ENCODE measurements at regions of chr1 and their contacts with region 1.

Region 1: GRCh38 chr1:84944767-84945486 is 51.9 kb upstream of the LPAR3 start:
- DNase-seq: peak; percentile 67 to 90 (median 70)
- ATAC-seq: peak; percentile 96
- H3K4me3 ChIP-seq: no peak overlapping the region
- H3K27ac ChIP-seq: no peak overlapping the region; the same call in 2 of the 3 replicates
- H3K4me1 ChIP-seq: no peaks in the 10 kb centered on the region; a peak in 1 of 5 replicates
- H3K27me3 ChIP-seq: peaks cover 14 to 21% of the 10 kb centered on the region in 2 experiments; a peak in 4 of 5 replicates
- CTCF ChIP-seq: peak; percentile 71 to 88 (median 73)
- EP300 ChIP-seq: no peak
- POLR2A ChIP-seq: no peak
- RAD21 ChIP-seq: peak; percentile 87 to 94

Region 2: DNA sequence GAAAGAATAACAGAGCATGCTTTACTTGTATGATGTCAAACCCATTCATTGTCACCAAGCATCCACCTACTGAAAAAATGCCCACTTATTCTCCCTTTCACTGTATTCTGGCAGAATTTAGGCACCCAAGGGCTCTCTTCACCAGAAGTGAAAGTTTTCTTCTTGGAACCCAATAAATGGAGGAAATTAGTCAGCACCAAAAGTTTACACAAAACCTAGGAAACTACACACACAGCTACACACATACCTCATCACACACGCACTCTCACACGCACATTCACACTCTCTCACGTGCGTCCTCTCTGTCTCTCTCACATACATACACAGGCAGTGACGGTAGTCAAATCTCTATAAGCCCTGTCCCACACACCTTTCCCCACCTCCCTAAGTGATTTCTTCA is 14.4 kb after region 1 on chr1:
- CTCF ChIA-PET with region 1: no interaction called
- POLR2A ChIA-PET with region 1: no interaction called
- in situ Hi-C with region 1: no loop called
- intact Hi-C with region 1: no loop called
- DNase-seq: no peak
- ATAC-seq: no peak
- H3K4me3 ChIP-seq: no peak overlapping the region
- H3K27ac ChIP-seq: no peak overlapping the region
- H3K4me1 ChIP-seq: no peaks in the 10 kb centered on the region
- H3K27me3 ChIP-seq: no peaks in the 10 kb centered on the region; a peak in 1 of 5 replicates
- CTCF ChIP-seq: no peak
- EP300 ChIP-seq: no peak
- POLR2A ChIP-seq: no peak
- RAD21 ChIP-seq: no peak

Region 3: GRCh38 chr1:84996846-84997666 is 52.1 kb after region 1 on chr1 and contains the start of gene MCOLN2:
- CTCF ChIA-PET with region 1: no interaction called
- POLR2A ChIA-PET with region 1: no interaction called
- in situ Hi-C with region 1: no loop called
- intact Hi-C with region 1: loop called (anchors 2 kb)
- DNase-seq: peak; percentile 7 to 61 (median 56)
- ATAC-seq: peak; percentile 96
- H3K4me3 ChIP-seq: peak within 1 kb of the TSS; percentile 18; the same call in 1 of the 2 replicates
- H3K27ac ChIP-seq: no peak within 1 kb of the TSS
- H3K4me1 ChIP-seq: peaks cover 0 to 13% of the 10 kb centered on the region in 2 experiments; a peak in 2 of 5 replicates
- H3K27me3 ChIP-seq: peaks cover 12 to 26% of the 10 kb centered on the region in 2 experiments; a peak in 3 of 5 replicates
- CTCF ChIP-seq: no peak
- EP300 ChIP-seq: no peak
- POLR2A ChIP-seq: no peak
- RAD21 ChIP-seq: no peak
- polyA plus RNA-seq, gene MCOLN2: not detected

Region 4: GRCh38 chr1:85024718-85025117 is 79.8 kb after region 1 on chr1:
- CTCF ChIA-PET with region 1: interaction called, 5 read pairs
- POLR2A ChIA-PET with region 1: no interaction called
- in situ Hi-C with region 1: no loop called
- intact Hi-C with region 1: loop called (anchors 2 kb)
- DNase-seq: no peak
- ATAC-seq: peak; percentile 50; the same call in 1 of the 3 replicates
- H3K4me3 ChIP-seq: no peak overlapping the region
- H3K27ac ChIP-seq: no peak overlapping the region
- H3K4me1 ChIP-seq: no peaks in the 10 kb centered on the region
- H3K27me3 ChIP-seq: peaks cover 2 to 6% of the 10 kb centered on the region in 2 experiments; a peak in 1 of 5 replicates
- CTCF ChIP-seq: no peak
- EP300 ChIP-seq: no peak
- POLR2A ChIP-seq: no peak
- RAD21 ChIP-seq: no peak

Region 5: GRCh38 chr1:85091671-85092280 is 146.8 kb after region 1 on chr1:
- CTCF ChIA-PET with region 1: no interaction called
- POLR2A ChIA-PET with region 1: no interaction called
- in situ Hi-C with region 1: no loop called
- intact Hi-C with region 1: loop called (anchors 5 kb)
- DNase-seq: no peak
- ATAC-seq: peak; percentile 44
- H3K4me3 ChIP-seq: no peak overlapping the region
- H3K27ac ChIP-seq: no peak overlapping the region
- H3K4me1 ChIP-seq: no peaks in the 10 kb centered on the region
- H3K27me3 ChIP-seq: peaks cover 4 to 5% of the 10 kb centered on the region in 2 experiments; a peak in 4 of 5 replicates
- CTCF ChIP-seq: no peak
- EP300 ChIP-seq: no peak
- POLR2A ChIP-seq: no peak
- RAD21 ChIP-seq: no peak

Region 6: GRCh38 chr1:85109475-85109874 is 164.5 kb after region 1 on chr1:
- CTCF ChIA-PET with region 1: no interaction called
- POLR2A ChIA-PET with region 1: no interaction called
- in situ Hi-C with region 1: no loop called
- intact Hi-C with region 1: loop called (anchors 2 kb)
- DNase-seq: peak; percentile 23 to 76 (median 52)
- ATAC-seq: peak; percentile 100
- H3K4me3 ChIP-seq: no peak overlapping the region
- H3K27ac ChIP-seq: no peak overlapping the region
- H3K4me1 ChIP-seq: no peaks in the 10 kb centered on the region
- H3K27me3 ChIP-seq: peaks cover 0 to 6% of the 10 kb centered on the region in 2 experiments; a peak in 1 of 5 replicates
- CTCF ChIP-seq: peak; percentile 83 to 91 (median 90)
- EP300 ChIP-seq: no peak
- POLR2A ChIP-seq: no peak
- RAD21 ChIP-seq: peak; percentile 94 to 96

Region 7: GRCh38 chr1:85259118-85259911 is 314.4 kb after region 1 on chr1 and contains the start of gene C1orf52:
- CTCF ChIA-PET with region 1: interaction called, 30 read pairs
- POLR2A ChIA-PET with region 1: no interaction called
- in situ Hi-C with region 1: loop called (anchors 5 kb)
- intact Hi-C with region 1: loop called (anchors 1 kb)
- DNase-seq: peak; percentile 91 to 96 (median 92)
- ATAC-seq: peak; percentile 97
- H3K4me3 ChIP-seq: peak within 1 kb of the TSS; percentile 93
- H3K27ac ChIP-seq: peak within 1 kb of the TSS; percentile 86
- H3K4me1 ChIP-seq: peaks cover 3 to 10% of the 10 kb centered on the region in 2 experiments; a peak in 4 of 5 replicates
- H3K27me3 ChIP-seq: no peaks in the 10 kb centered on the region
- CTCF ChIP-seq: peak; percentile 88 to 94 (median 94)
- EP300 ChIP-seq: no peak
- POLR2A ChIP-seq: peak; percentile 95
- RAD21 ChIP-seq: peak; percentile 77 to 88
- polyA plus RNA-seq, gene C1orf52: 17.0 to 22.5 TPM

Region 8: DNA sequence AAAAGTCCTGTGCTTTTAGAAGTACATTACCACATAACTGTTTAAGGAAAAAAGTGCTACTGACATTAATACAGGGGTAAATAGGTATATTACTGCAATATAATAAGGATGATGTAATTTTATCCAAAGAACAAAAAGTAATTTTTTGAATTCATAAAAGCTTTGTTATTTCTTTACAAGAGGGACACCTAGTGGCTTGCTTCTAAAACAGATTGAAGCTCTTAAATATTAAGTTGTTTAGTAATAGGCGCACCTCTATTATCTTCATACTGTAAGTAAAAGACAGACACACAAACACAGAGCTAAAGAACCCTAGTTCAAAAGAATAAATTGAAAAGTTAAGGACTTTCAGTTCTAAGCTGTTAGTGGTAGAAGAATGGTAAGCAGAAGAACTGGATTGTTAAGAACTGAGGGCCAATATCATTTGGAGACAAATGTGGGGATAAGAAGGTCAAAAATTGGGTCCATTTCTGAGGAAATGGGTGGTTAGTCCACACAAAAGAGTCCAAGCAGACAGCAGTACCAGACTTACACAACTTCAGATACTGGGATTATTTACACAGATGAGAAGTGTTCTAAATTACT is 747.9 kb after region 1 on chr1:
- CTCF ChIA-PET with region 1: interaction called, 5 read pairs
- POLR2A ChIA-PET with region 1: no interaction called
- in situ Hi-C with region 1: no loop called
- intact Hi-C with region 1: loop called (anchors 10 kb)
- DNase-seq: peak in 1 of 4 experiments; percentile 6
- ATAC-seq: peak; percentile 37; the same call in 1 of the 3 replicates
- H3K4me3 ChIP-seq: no peak overlapping the region
- H3K27ac ChIP-seq: no peak overlapping the region
- H3K4me1 ChIP-seq: no peaks in the 10 kb centered on the region; a peak in 1 of 5 replicates
- H3K27me3 ChIP-seq: no peaks in the 10 kb centered on the region
- CTCF ChIP-seq: peak in 1 of 3 experiments; percentile 50; a peak in 2 of 6 replicates
- EP300 ChIP-seq: no peak
- POLR2A ChIP-seq: no peak
- RAD21 ChIP-seq: peak; percentile 35 to 53

Measured in K562 (cell line).